Transverse colon (tissue), 4 donors: ENCODE measurements at regions of chr21 and their contacts with region 1.

Region 1: DNA sequence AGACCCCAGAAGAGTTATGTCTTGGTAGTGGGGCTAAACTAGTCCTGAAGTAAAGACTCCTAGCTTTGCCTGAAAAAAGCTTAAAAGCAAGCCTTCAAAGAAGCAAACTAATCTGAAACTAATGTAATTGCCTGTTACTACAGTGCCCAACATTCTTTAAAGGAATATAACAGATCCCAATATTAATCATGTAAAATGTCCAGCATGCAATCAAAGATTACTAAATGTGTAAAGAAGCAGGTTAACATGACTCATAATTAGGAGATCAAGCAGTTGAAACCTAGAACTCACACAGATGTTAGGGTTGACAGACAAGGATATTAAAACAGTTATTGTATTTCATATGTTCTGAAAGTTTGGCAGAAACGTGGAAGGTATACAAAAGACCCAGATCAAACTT is 17.8 kb downstream of the DYRK1A start:
- DNase-seq: no peak
- H3K4me3 ChIP-seq: no peak overlapping the region
- H3K27ac ChIP-seq: no peak overlapping the region
- H3K4me1 ChIP-seq: peaks cover 27 to 84% (median 36%) of the 10 kb centered on the region in 4 donors
- H3K27me3 ChIP-seq: no peaks in the 10 kb centered on the region
- CTCF ChIP-seq: no peak
- EP300 ChIP-seq: no peak
- POLR2A ChIP-seq: no peak

Region 2: DNA sequence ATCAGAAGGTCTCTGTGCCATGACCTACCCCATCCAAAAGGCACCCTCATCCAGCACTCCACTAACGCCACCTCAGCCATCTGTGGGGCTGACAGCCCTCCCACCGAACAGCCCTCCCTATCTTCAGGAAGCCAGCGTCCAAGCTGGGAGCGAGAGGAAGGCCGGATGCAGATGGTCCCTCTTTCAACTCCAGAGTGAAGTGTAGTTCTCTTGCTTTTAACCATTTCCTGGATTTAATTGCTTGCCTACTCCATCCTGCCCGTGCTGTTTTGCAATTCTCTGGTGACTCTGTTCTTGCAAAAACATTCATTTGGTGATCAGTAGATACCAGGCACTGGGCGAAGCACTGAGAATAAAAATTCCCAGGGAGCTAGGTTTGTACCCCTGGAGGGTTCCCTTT is 26.0 kb before region 1 on chr21:
- in situ Hi-C with region 1: no loop called
- intact Hi-C with region 1: loop called (anchors 1 kb)
- DNase-seq: no peak
- H3K4me3 ChIP-seq: no peak overlapping the region
- H3K27ac ChIP-seq: no peak overlapping the region
- H3K4me1 ChIP-seq: no peaks in the 10 kb centered on the region
- H3K27me3 ChIP-seq: no peaks in the 10 kb centered on the region
- CTCF ChIP-seq: no peak
- EP300 ChIP-seq: no peak
- POLR2A ChIP-seq: no peak

Region 3: GRCh38 chr21:37563641-37564340 is 179.4 kb after region 1 on chr21:
- in situ Hi-C with region 1: no loop called
- intact Hi-C with region 1: no loop called
- DNase-seq: peak; percentile 94
- H3K4me3 ChIP-seq: peak overlapping the region; percentile 67 to 92 (median 76)
- H3K27ac ChIP-seq: peak overlapping the region; percentile 91
- H3K4me1 ChIP-seq: peaks cover 5 to 22% (median 11%) of the 10 kb centered on the region in 4 donors
- H3K27me3 ChIP-seq: no peaks in the 10 kb centered on the region
- CTCF ChIP-seq: peak; percentile 26 to 57 (median 37)
- EP300 ChIP-seq: no peak
- POLR2A ChIP-seq: peak; percentile 66